OCI-LY7 (cell line): ENCODE measurements at regions of chr15 and their contacts with region 1.

Region 1: GRCh38 chr15:89430530-89431341 is 65.6 kb downstream of the RHCG start:
- DNase-seq: peak; percentile 81
- H3K4me3 ChIP-seq: peak overlapping the region; percentile 64
- H3K27ac ChIP-seq: no peak overlapping the region
- H3K4me1 ChIP-seq: peaks cover 11% of the 10 kb centered on the region
- CTCF ChIP-seq: peak; percentile 89

Region 2: GRCh38 chr15:89358755-89359439 is 71.8 kb before region 1 on chr15:
- CTCF ChIA-PET with region 1: interaction called, 8 read pairs
- POLR2A ChIA-PET with region 1: no interaction called
- intact Hi-C with region 1: loop called (anchors 1 kb)
- DNase-seq: peak; percentile 80
- H3K4me3 ChIP-seq: peak overlapping the region; percentile 67
- H3K27ac ChIP-seq: no peak overlapping the region
- H3K4me1 ChIP-seq: peaks cover 3% of the 10 kb centered on the region
- CTCF ChIP-seq: peak; percentile 97

Region 3: GRCh38 chr15:89416141-89416853 is 14.4 kb before region 1 on chr15:
- CTCF ChIA-PET with region 1: interaction called, 8 read pairs
- POLR2A ChIA-PET with region 1: no interaction called
- intact Hi-C with region 1: loop called (anchors 2 kb)
- DNase-seq: peak; percentile 87
- H3K4me3 ChIP-seq: no peak overlapping the region
- H3K27ac ChIP-seq: no peak overlapping the region
- H3K4me1 ChIP-seq: no peaks in the 10 kb centered on the region
- CTCF ChIP-seq: peak; percentile 99